Activated CD4-positive, alpha-beta T cell treated with anti-CD3 and anti-CD28 coated beads, Interleukin-2, amount 10 ng/mL, durations not matched to agents 24 days and 14 days (primary cell): ENCODE measurements at regions of chr4 and their contacts with region 1.

Region 1: DNA sequence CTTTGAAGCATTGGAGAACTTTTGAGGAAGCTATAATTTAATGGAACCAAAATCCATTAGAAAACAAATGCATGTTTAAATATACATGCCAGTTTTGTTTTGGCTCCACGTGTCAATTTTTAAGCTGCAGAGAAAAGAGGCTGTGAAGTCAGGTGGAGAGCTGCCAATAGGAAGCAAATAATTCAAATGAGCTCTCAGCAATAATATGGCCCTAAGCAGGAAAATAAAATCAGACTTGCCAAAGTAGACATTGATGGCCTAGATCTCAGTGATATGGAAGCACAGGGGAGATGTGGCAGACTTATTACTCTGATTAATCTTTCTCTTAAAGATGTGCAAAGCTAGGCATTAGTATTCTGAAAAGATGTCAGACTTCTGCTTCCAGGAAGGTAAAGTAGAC is 769.8 kb upstream of the NDST4 start:
- DNase-seq: no peak
- H3K4me3 Mint-ChIP-seq: no peak overlapping the region
- H3K27ac Mint-ChIP-seq: no peak overlapping the region
- H3K4me1 Mint-ChIP-seq: no peaks in the 10 kb centered on the region
- H3K27me3 Mint-ChIP-seq: no peaks in the 10 kb centered on the region

Region 2: GRCh38 chr4:115844180-115844579 is 39.1 kb before region 1 on chr4:
- intact Hi-C with region 1: no loop called
- DNase-seq: no peak
- H3K4me3 Mint-ChIP-seq: no peak overlapping the region
- H3K27ac Mint-ChIP-seq: no peak overlapping the region
- H3K4me1 Mint-ChIP-seq: no peaks in the 10 kb centered on the region
- H3K27me3 Mint-ChIP-seq: no peaks in the 10 kb centered on the region

Region 3: DNA sequence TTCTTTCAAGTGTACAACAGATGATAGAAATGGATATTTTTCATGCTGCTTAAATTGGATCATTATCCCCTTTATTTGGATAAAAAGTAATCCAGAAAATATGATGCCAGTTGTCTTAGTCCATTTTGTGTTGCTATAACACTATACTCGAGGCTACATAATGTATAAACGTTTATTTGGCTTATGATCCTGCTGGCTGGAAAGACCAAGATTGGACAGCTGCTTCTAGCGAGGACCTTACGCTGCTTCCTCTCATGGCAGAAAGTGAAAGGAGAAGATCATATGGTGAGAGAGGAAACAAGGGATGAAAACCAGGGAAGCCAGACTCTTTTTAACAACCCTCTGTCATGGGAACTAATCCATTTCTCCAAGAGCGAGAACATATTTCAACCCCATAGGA is 1099.4 kb after region 1 on chr4:
- intact Hi-C with region 1: loop called (anchors 10 kb)
- DNase-seq: no peak
- H3K4me3 Mint-ChIP-seq: no peak overlapping the region
- H3K27ac Mint-ChIP-seq: no peak overlapping the region
- H3K4me1 Mint-ChIP-seq: no peaks in the 10 kb centered on the region
- H3K27me3 Mint-ChIP-seq: no peaks in the 10 kb centered on the region